ENCODE measurements at regions of chr15 and their contacts with region 1.

Region 1: DNA sequence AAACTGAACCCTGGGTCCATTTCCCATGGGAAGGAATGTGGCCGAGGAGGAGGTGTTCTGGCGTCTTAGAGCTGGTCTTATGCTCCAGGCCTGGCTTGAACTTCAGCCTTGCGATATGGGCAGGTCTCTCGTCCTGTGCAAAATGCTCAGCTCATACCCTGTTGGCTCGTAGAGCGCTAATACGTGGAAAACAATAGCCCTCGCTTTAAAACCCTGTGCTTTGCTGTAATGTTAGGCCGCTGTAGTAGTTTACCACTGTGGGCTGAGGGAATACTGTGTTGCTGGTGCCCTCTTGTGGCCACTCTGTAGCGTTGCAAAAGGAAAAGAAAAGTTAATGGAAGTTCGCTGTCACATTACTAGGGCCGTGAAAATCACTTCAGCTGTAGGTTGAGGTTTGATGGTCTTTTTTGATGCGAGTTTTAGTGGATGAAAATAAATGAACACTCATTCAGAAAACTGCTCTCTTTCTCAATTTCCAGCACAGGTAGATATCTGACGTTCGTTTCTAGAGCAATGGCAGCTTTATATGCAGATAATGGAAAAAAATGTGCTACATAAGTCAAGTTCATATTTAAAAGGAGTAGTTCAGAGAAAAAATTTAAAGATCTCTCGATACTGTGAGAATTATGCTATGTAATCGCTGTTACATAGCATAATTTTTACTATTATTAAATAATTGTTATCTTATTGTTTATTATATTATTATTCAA is 92.9 kb downstream of the MCTP2 start:
- H3K4me3 Mint-ChIP-seq: no peak overlapping the region
- H3K27ac Mint-ChIP-seq: no peak overlapping the region
- H3K4me1 Mint-ChIP-seq: peaks cover 25% of the 10 kb centered on the region
- H3K27me3 Mint-ChIP-seq: peaks cover 9% of the 10 kb centered on the region

Region 2: DNA sequence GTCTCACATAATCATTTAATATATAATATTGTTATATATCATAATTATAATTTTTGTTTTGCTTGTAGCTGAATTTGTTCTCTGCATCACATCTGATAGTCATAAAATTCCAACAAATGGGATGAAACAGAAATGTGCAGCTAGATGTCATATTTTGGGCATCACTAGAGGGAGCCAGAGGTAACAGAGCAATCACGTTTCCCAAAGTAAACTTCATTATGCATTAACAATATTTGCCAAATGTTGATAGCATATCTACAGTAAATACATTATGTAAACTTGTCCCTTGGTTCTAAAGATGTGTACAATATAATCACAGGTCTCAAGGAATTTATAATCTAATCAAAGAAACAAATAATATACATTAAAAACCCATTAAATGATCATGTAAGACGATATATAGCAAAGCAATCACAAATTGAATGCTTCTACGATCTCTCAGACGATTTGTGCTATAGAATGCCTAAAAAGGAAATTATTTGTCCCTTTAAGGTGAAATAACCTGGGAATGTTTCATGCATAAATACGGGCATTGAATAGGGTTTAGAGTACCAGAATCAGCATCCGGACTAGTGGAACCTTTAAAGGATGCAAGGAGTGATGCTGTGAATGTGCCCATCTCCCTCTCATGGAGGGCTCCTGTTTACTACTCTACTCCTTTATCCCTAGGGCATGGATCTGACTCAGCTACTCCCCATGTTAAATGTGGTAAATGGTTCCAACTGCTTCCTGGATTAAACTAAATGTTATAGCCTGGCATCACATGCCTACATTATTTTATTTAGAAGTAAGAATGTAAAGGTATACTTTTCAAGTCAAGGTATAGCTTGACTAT is 327.0 kb before region 1 on chr15:
- intact Hi-C with region 1: loop called (anchors 10 kb)
- H3K4me3 Mint-ChIP-seq: no peak overlapping the region
- H3K27ac Mint-ChIP-seq: no peak overlapping the region
- H3K4me1 Mint-ChIP-seq: no peaks in the 10 kb centered on the region
- H3K27me3 Mint-ChIP-seq: no peaks in the 10 kb centered on the region

Region 3: GRCh38 chr15:94186770-94187331 is 137.4 kb before region 1 on chr15:
- intact Hi-C with region 1: no loop called
- H3K4me3 Mint-ChIP-seq: no peak overlapping the region
- H3K27ac Mint-ChIP-seq: no peak overlapping the region
- H3K4me1 Mint-ChIP-seq: no peaks in the 10 kb centered on the region
- H3K27me3 Mint-ChIP-seq: peaks cover 41% of the 10 kb centered on the region

Region 4: DNA sequence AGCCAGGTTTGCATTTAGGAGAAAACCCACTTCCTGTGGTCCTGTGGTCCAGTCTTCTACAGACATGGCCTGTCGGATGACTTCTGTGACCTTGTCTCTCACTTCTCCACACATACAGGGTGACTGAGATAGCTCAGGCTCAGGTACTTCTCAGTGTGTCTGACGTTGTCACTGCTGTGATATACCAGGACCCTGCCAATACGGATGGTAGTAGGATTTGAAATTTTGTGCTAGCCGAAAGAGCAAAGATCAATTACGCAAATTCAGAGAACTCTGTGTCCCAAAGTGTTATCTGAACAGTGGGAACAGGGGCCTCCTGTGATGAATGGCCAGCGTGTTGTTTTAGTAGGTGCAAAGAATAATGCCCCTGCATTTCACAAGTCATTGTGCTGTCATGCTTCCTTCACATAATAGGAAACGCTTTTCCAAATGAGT is 36.0 kb after region 1 on chr15:
- intact Hi-C with region 1: no loop called
- H3K4me3 Mint-ChIP-seq: no peak overlapping the region
- H3K27ac Mint-ChIP-seq: no peak overlapping the region
- H3K4me1 Mint-ChIP-seq: peaks cover 5% of the 10 kb centered on the region
- H3K27me3 Mint-ChIP-seq: no peaks in the 10 kb centered on the region

Region 5: GRCh38 chr15:94453227-94453988 is 129.1 kb after region 1 on chr15:
- intact Hi-C with region 1: loop called (anchors 10 kb)
- H3K4me3 Mint-ChIP-seq: no peak overlapping the region
- H3K27ac Mint-ChIP-seq: no peak overlapping the region
- H3K4me1 Mint-ChIP-seq: peaks cover 33% of the 10 kb centered on the region
- H3K27me3 Mint-ChIP-seq: no peaks in the 10 kb centered on the region

Region 6: GRCh38 chr15:95291898-95292472 is 967.7 kb after region 1 on chr15:
- intact Hi-C with region 1: loop called (anchors 5 kb)
- H3K4me3 Mint-ChIP-seq: no peak overlapping the region
- H3K27ac Mint-ChIP-seq: no peak overlapping the region
- H3K4me1 Mint-ChIP-seq: no peaks in the 10 kb centered on the region
- H3K27me3 Mint-ChIP-seq: peaks cover 25% of the 10 kb centered on the region

Measured in dendritic cell treated with granulocyte-macrophage colony-stimulating factor and Interleukin-4, amounts not matched to agents 40 ng/mL and 50 ng/mL, for 4 days (primary cell).